ENCODE measurements at regions of chr2 and their contacts with region 1.

Region 1: DNA sequence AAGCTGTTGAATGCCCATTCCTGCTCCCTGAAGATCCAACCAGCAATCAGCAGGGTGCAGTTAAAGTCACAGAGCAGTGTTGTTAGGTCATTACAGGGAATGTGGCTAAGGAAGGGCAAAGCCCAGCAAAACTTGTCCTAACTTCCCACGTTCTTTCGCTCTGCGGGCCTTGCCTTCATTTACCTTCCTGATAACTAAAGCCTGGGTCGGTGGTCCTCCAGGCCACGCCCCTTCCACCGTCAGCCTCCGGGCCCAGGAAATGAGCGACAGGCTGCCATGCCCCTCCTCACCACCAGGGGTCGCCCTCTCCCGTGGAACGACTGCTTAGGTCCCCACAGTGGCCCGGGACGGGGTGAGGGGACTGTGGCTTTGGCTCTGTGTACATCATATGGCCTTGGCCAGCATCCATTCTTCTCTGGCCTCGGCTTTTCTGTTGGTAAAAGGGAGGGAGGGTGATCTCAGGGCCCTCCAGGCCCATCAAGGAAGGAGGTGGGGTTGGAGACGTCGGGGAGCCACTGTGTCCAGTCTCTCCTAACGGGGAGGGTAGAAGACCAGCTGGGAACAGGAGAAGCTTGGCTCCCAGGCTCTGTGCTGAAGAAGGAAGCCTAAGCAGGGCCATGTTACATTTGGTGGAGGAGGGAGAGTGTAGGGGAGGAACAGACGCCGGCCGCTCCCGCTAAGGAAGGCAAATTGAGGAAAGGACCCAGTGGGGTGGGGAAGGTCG is 2.2 kb downstream of the SH2D6 start:
- DNase-seq: peak; percentile 21
- H3K4me3 ChIP-seq: peak overlapping the region in 1 of 3 experiments; percentile 12
- H3K27ac ChIP-seq: no peak overlapping the region
- H3K4me1 ChIP-seq: peaks cover 30% of the 10 kb centered on the region
- H3K27me3 ChIP-seq: no peaks in the 10 kb centered on the region
- CTCF ChIP-seq: peak; percentile 96 to 99

Region 2: GRCh38 chr2:85066874-85067351 is 353.8 kb before region 1 on chr2:
- CTCF ChIA-PET with region 1: no interaction called
- dilution Hi-C with region 1: no loop called
- in situ Hi-C with region 1: no loop called
- intact Hi-C with region 1: loop called (anchors 2 kb)
- DNase-seq: peak; percentile 40
- H3K4me3 ChIP-seq: no peak overlapping the region
- H3K27ac ChIP-seq: no peak overlapping the region
- H3K4me1 ChIP-seq: peaks cover 5% of the 10 kb centered on the region
- H3K27me3 ChIP-seq: no peaks in the 10 kb centered on the region
- CTCF ChIP-seq: peak; percentile 74 to 88

Region 3: GRCh38 chr2:85354286-85355072 is 66.2 kb before region 1 on chr2 and contains the starts of genes ELMOD3 and RETSAT:
- CTCF ChIA-PET with region 1: no interaction called
- dilution Hi-C with region 1: no loop called
- in situ Hi-C with region 1: no loop called
- intact Hi-C with region 1: loop called (anchors 2 kb)
- DNase-seq: peak; percentile 99
- H3K4me3 ChIP-seq: peak within 1 kb of the TSS; percentile 78 to 95 (median 84)
- H3K27ac ChIP-seq: peak within 1 kb of the TSS; percentile 54
- H3K4me1 ChIP-seq: peaks cover 11% of the 10 kb centered on the region
- H3K27me3 ChIP-seq: no peaks in the 10 kb centered on the region
- CTCF ChIP-seq: no peak
- total RNA-seq, gene ELMOD3: 17.5 to 23.0 TPM
- total RNA-seq, gene RETSAT: 94.7 to 157 TPM

Region 4: GRCh38 chr2:85504778-85505323 is 84.2 kb after region 1 on chr2:
- CTCF ChIA-PET with region 1: no interaction called
- dilution Hi-C with region 1: no loop called
- in situ Hi-C with region 1: no loop called
- intact Hi-C with region 1: loop called (anchors 2 kb)
- DNase-seq: peak; percentile 99
- H3K4me3 ChIP-seq: no peak overlapping the region
- H3K27ac ChIP-seq: peak overlapping the region; percentile 73
- H3K4me1 ChIP-seq: peaks cover 41% of the 10 kb centered on the region
- H3K27me3 ChIP-seq: no peaks in the 10 kb centered on the region
- CTCF ChIP-seq: no peak